ENCODE measurements at regions of chr19 and their contacts with region 1.

Region 1: GRCh38 chr19:35114353-35115176 is 1.1 kb upstream of the FXYD3 start:
- DNase-seq: peak; percentile 54 to 82 (median 64)
- ATAC-seq: peak; percentile 95
- H3K4me3 ChIP-seq: no peak overlapping the region
- H3K4me3 Mint-ChIP-seq: no peak overlapping the region
- H3K27ac ChIP-seq: no peak overlapping the region
- H3K27ac Mint-ChIP-seq: no peak overlapping the region
- H3K4me1 ChIP-seq: peaks cover 8% of the 10 kb centered on the region
- H3K4me1 Mint-ChIP-seq: peaks cover 6% of the 10 kb centered on the region
- H3K27me3 ChIP-seq: peaks cover 0 to under 1% of the 10 kb centered on the region in 2 experiments
- H3K27me3 Mint-ChIP-seq: no peaks in the 10 kb centered on the region
- CTCF ChIP-seq: peak; percentile 84

Region 2: GRCh38 chr19:35135389-35135909 is 20.9 kb after region 1 on chr19:
- CTCF ChIA-PET with region 1: no interaction called
- POLR2A ChIA-PET with region 1: no interaction called
- intact Hi-C with region 1: loop called in 1 of 2 experiments (anchors 2 kb)
- DNase-seq: peak in 13 of 14 experiments; percentile 42 to 81 (median 58)
- ATAC-seq: peak; percentile 92
- H3K4me3 ChIP-seq: no peak overlapping the region
- H3K4me3 Mint-ChIP-seq: no peak overlapping the region
- H3K27ac ChIP-seq: no peak overlapping the region
- H3K27ac Mint-ChIP-seq: peak overlapping the region; percentile 13
- H3K4me1 ChIP-seq: peaks cover 13% of the 10 kb centered on the region
- H3K4me1 Mint-ChIP-seq: peaks cover 8% of the 10 kb centered on the region
- H3K27me3 ChIP-seq: no peaks in the 10 kb centered on the region
- H3K27me3 Mint-ChIP-seq: no peaks in the 10 kb centered on the region
- CTCF ChIP-seq: peak; percentile 58